ENCODE measurements at regions of chr5 and their contacts with region 1.

Region 1: GRCh38 chr5:151115274-151115905 is 34.6 kb upstream of the TNIP1 start:
- DNase-seq: peak; percentile 51 to 84 (median 70)
- ATAC-seq: peak; percentile 94
- H3K4me3 ChIP-seq: no peak overlapping the region
- H3K4me3 Mint-ChIP-seq: no peak overlapping the region
- H3K27ac ChIP-seq: no peak overlapping the region
- H3K27ac Mint-ChIP-seq: peak overlapping the region; percentile 47
- H3K4me1 ChIP-seq: peaks cover 6% of the 10 kb centered on the region
- H3K4me1 Mint-ChIP-seq: peaks cover 21% of the 10 kb centered on the region
- H3K27me3 ChIP-seq: no peaks in the 10 kb centered on the region
- H3K27me3 Mint-ChIP-seq: no peaks in the 10 kb centered on the region
- CTCF ChIP-seq: peak; percentile 97

Region 2: DNA sequence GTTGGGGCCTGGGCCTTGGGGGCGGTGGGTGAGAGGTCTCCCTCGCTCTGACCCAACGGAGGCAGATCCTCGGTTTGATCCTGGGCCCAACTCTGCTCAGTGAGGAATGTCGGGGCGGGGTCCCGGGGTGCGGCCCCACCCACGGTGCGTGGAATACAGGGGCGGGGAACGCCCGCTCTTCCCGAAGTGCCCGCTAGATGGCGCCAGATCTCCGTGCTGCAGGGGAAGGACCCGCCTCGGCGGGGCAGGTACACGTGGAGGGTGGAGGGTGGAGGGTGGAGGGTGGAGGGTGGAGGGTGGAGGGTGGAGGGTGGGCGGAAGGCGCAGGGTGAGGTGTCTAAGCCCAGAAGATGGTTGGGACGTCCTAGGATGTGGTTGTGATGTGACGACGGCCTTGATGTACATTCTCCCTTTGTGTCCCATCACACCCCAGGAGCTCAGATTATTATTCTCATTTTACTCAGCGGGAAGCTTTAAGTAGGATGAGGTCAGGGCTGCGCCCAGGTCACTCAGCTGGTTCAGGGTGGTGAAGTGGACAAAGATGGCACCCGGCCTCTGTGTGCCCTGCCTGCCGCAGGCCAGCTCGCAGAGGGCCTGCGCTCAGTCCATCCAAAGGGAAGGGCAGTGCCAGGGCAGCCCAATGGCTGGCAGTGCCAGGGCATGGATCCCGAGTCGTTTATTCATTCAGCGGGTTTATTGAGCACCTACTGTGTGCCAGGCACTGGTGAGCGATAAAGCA is 656.4 kb before region 1 on chr5:
- CTCF ChIA-PET with region 1: no interaction called
- POLR2A ChIA-PET with region 1: no interaction called
- intact Hi-C with region 1: loop called (anchors 2 kb)
- DNase-seq: peak; percentile 78 to 93 (median 87)
- ATAC-seq: peak; percentile 91
- H3K4me3 ChIP-seq: no peak overlapping the region
- H3K4me3 Mint-ChIP-seq: no peak overlapping the region
- H3K27ac ChIP-seq: no peak overlapping the region
- H3K27ac Mint-ChIP-seq: peak overlapping the region; percentile 61
- H3K4me1 ChIP-seq: peaks cover 37% of the 10 kb centered on the region
- H3K4me1 Mint-ChIP-seq: peaks cover 45% of the 10 kb centered on the region
- H3K27me3 ChIP-seq: no peaks in the 10 kb centered on the region
- H3K27me3 Mint-ChIP-seq: no peaks in the 10 kb centered on the region
- CTCF ChIP-seq: peak; percentile 80

Region 3: DNA sequence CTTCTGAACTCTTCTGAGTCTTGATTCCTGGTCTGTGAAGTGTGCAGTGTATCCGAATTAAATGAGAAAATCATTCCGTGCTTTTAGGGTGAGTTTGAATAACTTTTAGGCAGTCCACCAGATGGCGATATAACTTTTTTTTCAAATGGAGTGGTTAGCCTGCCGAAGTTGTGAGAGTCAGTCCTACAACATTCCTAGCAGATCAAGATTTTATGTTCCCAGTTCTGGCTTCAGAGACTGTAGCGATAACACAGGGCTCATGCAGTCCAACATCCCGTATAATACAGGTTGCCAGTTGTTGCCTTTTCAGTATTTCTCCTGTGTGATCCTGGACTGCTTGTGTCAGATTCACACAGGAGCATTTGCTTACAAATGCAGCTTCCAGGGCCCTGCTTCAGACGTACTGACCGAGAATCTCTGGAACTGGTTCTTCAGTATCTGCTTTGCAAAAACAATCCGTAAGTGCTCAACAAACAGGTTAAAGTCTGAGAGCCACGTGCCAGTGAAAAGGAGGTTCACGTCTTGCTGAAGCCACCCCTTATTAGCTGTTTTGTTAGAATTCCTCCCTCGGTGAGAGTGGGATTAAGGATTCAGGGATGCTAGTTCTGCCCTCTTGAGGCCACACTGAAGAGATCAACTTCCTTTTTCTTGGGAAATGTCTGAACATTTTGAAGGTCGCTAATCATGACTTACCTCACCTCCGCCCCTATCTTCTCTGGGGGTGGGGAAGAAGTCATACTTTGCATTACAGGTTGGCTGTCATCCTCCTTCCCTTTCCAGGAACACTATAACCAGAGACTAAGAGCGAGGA is 314.1 kb before region 1 on chr5:
- CTCF ChIA-PET with region 1: interaction called, 5 read pairs
- POLR2A ChIA-PET with region 1: no interaction called
- intact Hi-C with region 1: loop called (anchors 5 kb)
- DNase-seq: peak in 3 of 14 experiments; percentile 62 to 74 (median 70)
- ATAC-seq: peak; percentile 49
- H3K4me3 ChIP-seq: no peak overlapping the region
- H3K4me3 Mint-ChIP-seq: no peak overlapping the region
- H3K27ac ChIP-seq: no peak overlapping the region
- H3K27ac Mint-ChIP-seq: no peak overlapping the region
- H3K4me1 ChIP-seq: peaks cover 7% of the 10 kb centered on the region
- H3K4me1 Mint-ChIP-seq: peaks cover 5% of the 10 kb centered on the region
- H3K27me3 ChIP-seq: no peaks in the 10 kb centered on the region
- H3K27me3 Mint-ChIP-seq: no peaks in the 10 kb centered on the region
- CTCF ChIP-seq: peak; percentile 77

Region 4: GRCh38 chr5:151072627-151073029 is 42.8 kb before region 1 on chr5:
- CTCF ChIA-PET with region 1: interaction called, 11 read pairs
- POLR2A ChIA-PET with region 1: no interaction called
- intact Hi-C with region 1: no loop called
- DNase-seq: no peak
- ATAC-seq: no peak
- H3K4me3 ChIP-seq: no peak overlapping the region
- H3K4me3 Mint-ChIP-seq: peak overlapping the region; percentile 34
- H3K27ac ChIP-seq: no peak overlapping the region
- H3K27ac Mint-ChIP-seq: peak overlapping the region; percentile 70
- H3K4me1 ChIP-seq: peaks cover 80% of the 10 kb centered on the region
- H3K4me1 Mint-ChIP-seq: peaks cover 80% of the 10 kb centered on the region
- H3K27me3 ChIP-seq: no peaks in the 10 kb centered on the region
- H3K27me3 Mint-ChIP-seq: no peaks in the 10 kb centered on the region
- CTCF ChIP-seq: no peak

Region 5: GRCh38 chr5:151086905-151087360 is 28.5 kb before region 1 on chr5:
- CTCF ChIA-PET with region 1: interaction called, 13 read pairs
- POLR2A ChIA-PET with region 1: interaction called, 8 read pairs
- intact Hi-C with region 1: no loop called
- DNase-seq: peak; percentile 40 to 90 (median 58)
- ATAC-seq: peak; percentile 81
- H3K4me3 ChIP-seq: peak overlapping the region; percentile 53
- H3K4me3 Mint-ChIP-seq: peak overlapping the region; percentile 35
- H3K27ac ChIP-seq: peak overlapping the region in 1 of 2 donors; percentile 91
- H3K27ac Mint-ChIP-seq: peak overlapping the region; percentile 87
- H3K4me1 ChIP-seq: peaks cover 58% of the 10 kb centered on the region
- H3K4me1 Mint-ChIP-seq: peaks cover 66% of the 10 kb centered on the region
- H3K27me3 ChIP-seq: no peaks in the 10 kb centered on the region
- H3K27me3 Mint-ChIP-seq: no peaks in the 10 kb centered on the region
- CTCF ChIP-seq: no peak

Region 6: GRCh38 chr5:151126199-151126645 is 10.8 kb after region 1 on chr5:
- CTCF ChIA-PET with region 1: interaction called, 24 read pairs
- POLR2A ChIA-PET with region 1: interaction called, 7 read pairs
- intact Hi-C with region 1: no loop called
- DNase-seq: peak; percentile 42 to 84 (median 62)
- ATAC-seq: peak; percentile 61
- H3K4me3 ChIP-seq: no peak overlapping the region
- H3K4me3 Mint-ChIP-seq: no peak overlapping the region
- H3K27ac ChIP-seq: peak overlapping the region in 1 of 2 donors; percentile 50
- H3K27ac Mint-ChIP-seq: peak overlapping the region; percentile 91
- H3K4me1 ChIP-seq: peaks cover 53% of the 10 kb centered on the region
- H3K4me1 Mint-ChIP-seq: peaks cover 71% of the 10 kb centered on the region
- H3K27me3 ChIP-seq: no peaks in the 10 kb centered on the region
- H3K27me3 Mint-ChIP-seq: no peaks in the 10 kb centered on the region
- CTCF ChIP-seq: peak; percentile 90

Region 7: GRCh38 chr5:151664694-151665585 is 549.5 kb after region 1 on chr5:
- CTCF ChIA-PET with region 1: no interaction called
- POLR2A ChIA-PET with region 1: no interaction called
- intact Hi-C with region 1: no loop called
- DNase-seq: no peak
- ATAC-seq: no peak
- H3K4me3 ChIP-seq: no peak overlapping the region
- H3K4me3 Mint-ChIP-seq: no peak overlapping the region
- H3K27ac ChIP-seq: no peak overlapping the region
- H3K27ac Mint-ChIP-seq: no peak overlapping the region
- H3K4me1 ChIP-seq: no peaks in the 10 kb centered on the region
- H3K4me1 Mint-ChIP-seq: peaks cover 9% of the 10 kb centered on the region
- H3K27me3 ChIP-seq: no peaks in the 10 kb centered on the region
- H3K27me3 Mint-ChIP-seq: no peaks in the 10 kb centered on the region
- CTCF ChIP-seq: no peak